HEK293 (cell line): ENCODE measurements at regions of chr6 and their contacts with region 1.

Region 1: DNA sequence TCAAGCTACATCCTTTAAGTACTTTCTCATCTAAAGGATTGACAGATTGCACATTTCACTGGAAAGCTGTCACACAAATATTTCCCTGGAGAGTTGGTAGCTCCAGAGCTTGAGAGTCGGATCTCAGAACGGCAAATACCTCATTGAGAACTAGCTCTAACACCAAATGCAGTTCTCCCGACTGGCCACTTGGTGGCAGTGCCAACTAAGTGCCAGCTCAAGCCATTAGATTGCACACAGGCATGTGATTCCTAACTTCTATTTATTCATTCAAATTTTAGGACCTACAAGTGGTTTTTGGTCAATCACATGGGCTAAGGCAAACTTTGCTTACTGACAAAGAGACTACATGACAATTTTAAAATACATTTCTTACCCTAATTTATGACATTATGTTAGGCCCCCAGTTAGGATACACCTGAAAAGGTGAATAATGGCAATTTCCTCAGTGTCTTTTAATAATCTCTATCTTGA is 7.9 kb upstream of the MCHR2 start:
- H3K4me3 ChIP-seq: no peak overlapping the region
- H3K27ac ChIP-seq: no peak overlapping the region
- H3K4me1 ChIP-seq: no peaks in the 10 kb centered on the region
- CTCF ChIP-seq: 0 out of 2 replicates have a peak, but pooled peaks have one; percentile 36

Region 2: DNA sequence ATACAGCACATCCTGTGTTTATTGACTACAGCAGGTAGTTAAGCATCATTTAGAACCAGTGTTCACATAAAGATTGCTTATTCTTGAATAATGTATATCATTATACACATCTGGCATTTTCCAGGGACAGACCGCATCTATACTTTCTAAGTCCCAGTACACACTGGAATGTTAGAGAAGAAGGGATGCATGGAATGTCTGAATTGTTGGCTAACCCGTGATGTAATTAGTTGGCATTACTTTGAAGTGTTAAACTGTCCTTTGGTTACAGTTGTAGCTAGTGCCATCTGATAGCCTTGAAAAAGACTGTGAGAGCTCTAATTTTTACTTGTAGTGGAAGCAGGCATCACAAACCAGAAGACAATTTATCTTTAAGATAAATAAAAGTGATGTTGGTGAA is 21.8 kb after region 1 on chr6:
- CTCF ChIA-PET with region 1: interaction called, 12 read pairs
- POLR2A ChIA-PET with region 1: no interaction called
- H3K4me3 ChIP-seq: no peak overlapping the region
- H3K27ac ChIP-seq: no peak overlapping the region
- H3K4me1 ChIP-seq: no peaks in the 10 kb centered on the region
- CTCF ChIP-seq: no peak

Region 3: GRCh38 chr6:100078509-100078908 is 76.6 kb after region 1 on chr6:
- CTCF ChIA-PET with region 1: interaction called, 10 read pairs
- POLR2A ChIA-PET with region 1: no interaction called
- H3K4me3 ChIP-seq: no peak overlapping the region
- H3K27ac ChIP-seq: no peak overlapping the region
- H3K4me1 ChIP-seq: no peaks in the 10 kb centered on the region
- CTCF ChIP-seq: peak; percentile 44

Region 4: GRCh38 chr6:100099189-100100074 is 97.5 kb after region 1 on chr6:
- CTCF ChIA-PET with region 1: interaction called, 82 read pairs
- POLR2A ChIA-PET with region 1: no interaction called
- H3K4me3 ChIP-seq: no peak overlapping the region
- H3K27ac ChIP-seq: no peak overlapping the region
- H3K4me1 ChIP-seq: no peaks in the 10 kb centered on the region
- CTCF ChIP-seq: no peak

Region 5: GRCh38 chr6:100269189-100269588 is 267.2 kb after region 1 on chr6:
- CTCF ChIA-PET with region 1: no interaction called
- POLR2A ChIA-PET with region 1: no interaction called
- H3K4me3 ChIP-seq: no peak overlapping the region
- H3K27ac ChIP-seq: no peak overlapping the region
- H3K4me1 ChIP-seq: no peaks in the 10 kb centered on the region
- CTCF ChIP-seq: no peak